ENCODE measurements at regions of chr19 and their contacts with region 1.

Region 1: DNA sequence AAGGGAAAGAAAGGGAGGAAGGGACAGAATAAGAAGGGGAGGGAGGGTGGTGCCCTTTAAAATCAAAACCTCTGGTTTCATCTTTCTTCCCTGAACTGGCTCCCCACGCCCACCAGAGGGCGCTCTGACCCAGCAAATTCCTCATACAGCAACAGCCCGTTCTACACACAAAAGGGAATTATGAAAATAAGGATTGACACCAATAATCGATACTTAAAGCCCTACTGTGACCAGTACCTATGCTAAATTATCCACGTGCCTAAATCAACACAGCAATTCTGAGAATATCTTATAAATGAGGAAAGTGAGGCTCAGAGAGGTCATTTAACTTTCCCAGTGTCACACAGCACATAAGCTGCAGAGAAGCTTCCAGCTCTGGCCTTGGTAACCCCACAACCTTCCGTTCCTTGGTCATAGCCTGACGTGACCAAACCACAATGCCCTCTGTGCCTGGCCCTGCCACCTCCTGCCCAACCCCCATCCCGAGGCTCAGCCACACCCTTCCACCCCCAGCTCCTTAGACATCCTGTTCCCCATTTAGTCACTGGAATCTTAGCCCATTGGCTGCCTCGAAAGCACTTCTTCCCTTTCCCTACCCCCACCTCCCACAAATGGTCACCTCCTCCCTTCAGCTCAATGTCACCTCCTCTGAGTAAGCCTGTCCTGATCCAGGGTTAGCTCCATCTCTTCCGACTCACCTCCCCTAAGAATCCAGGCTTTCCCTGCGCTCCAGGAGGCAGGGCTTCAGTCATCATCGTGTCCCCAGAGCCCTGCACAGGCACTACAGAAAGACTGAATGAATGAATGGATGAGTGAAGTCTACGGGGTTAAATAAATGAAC is 34.2 kb upstream of the PNMA8B start:
- DNase-seq: peak; percentile 62 to 75 (median 70)
- H3K4me3 ChIP-seq: no peak overlapping the region
- H3K4me3 Mint-ChIP-seq: peak overlapping the region in 2 of 8 donors; percentile 18 to 22
- H3K27ac ChIP-seq: no peak overlapping the region
- H3K27ac Mint-ChIP-seq: peak overlapping the region in 3 of 7 donors; percentile 29 to 66 (median 37)
- H3K4me1 ChIP-seq: peaks cover 14% of the 10 kb centered on the region
- H3K4me1 Mint-ChIP-seq: peaks cover 10 to 21% (median 13%) of the 10 kb centered on the region in 4 donors
- H3K27me3 ChIP-seq: no peaks in the 10 kb centered on the region
- H3K27me3 Mint-ChIP-seq: peaks cover 0 to 2% of the 10 kb centered on the region in 2 donors

Region 2: GRCh38 chr19:46239193-46240024 is 290.4 kb before region 1 on chr19:
- CTCF ChIA-PET with region 1: no interaction called
- POLR2A ChIA-PET with region 1: no interaction called
- intact Hi-C with region 1: no loop called
- DNase-seq: no peak
- H3K4me3 ChIP-seq: no peak overlapping the region
- H3K4me3 Mint-ChIP-seq: no peak overlapping the region
- H3K27ac ChIP-seq: no peak overlapping the region
- H3K27ac Mint-ChIP-seq: no peak overlapping the region
- H3K4me1 ChIP-seq: no peaks in the 10 kb centered on the region
- H3K4me1 Mint-ChIP-seq: no peaks in the 10 kb centered on the region
- H3K27me3 ChIP-seq: peaks cover 11% of the 10 kb centered on the region
- H3K27me3 Mint-ChIP-seq: peaks cover 31 to 44% of the 10 kb centered on the region in 2 donors

Region 3: GRCh38 chr19:46319613-46320012 is 210.2 kb before region 1 on chr19:
- CTCF ChIA-PET with region 1: no interaction called
- POLR2A ChIA-PET with region 1: no interaction called
- intact Hi-C with region 1: no loop called
- DNase-seq: no peak
- H3K4me3 ChIP-seq: no peak overlapping the region
- H3K4me3 Mint-ChIP-seq: no peak overlapping the region
- H3K27ac ChIP-seq: no peak overlapping the region
- H3K27ac Mint-ChIP-seq: peak overlapping the region in 1 of 7 donors; percentile 10
- H3K4me1 ChIP-seq: no peaks in the 10 kb centered on the region
- H3K4me1 Mint-ChIP-seq: no peaks in the 10 kb centered on the region
- H3K27me3 ChIP-seq: no peaks in the 10 kb centered on the region
- H3K27me3 Mint-ChIP-seq: no peaks in the 10 kb centered on the region

Region 4: DNA sequence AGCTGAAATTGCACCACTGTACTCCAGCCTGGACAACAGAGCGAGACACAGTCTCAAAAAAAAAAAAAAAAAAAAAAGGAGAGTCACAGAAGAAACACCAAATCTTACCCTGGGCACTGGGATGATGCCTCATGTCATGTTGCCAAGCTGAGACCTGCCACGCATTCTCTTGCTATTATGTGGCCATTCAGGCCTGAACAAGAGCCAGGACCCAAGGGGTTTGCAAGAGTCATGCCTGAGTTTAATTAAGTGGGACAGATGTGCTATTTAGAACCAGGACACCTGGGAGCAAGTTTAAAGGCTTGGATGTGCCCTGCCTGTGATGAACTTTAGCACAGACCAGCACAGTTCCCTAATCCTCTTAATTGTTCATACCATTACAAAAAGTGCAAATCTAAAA is 68.3 kb before region 1 on chr19:
- CTCF ChIA-PET with region 1: no interaction called
- POLR2A ChIA-PET with region 1: no interaction called
- intact Hi-C with region 1: no loop called
- DNase-seq: no peak
- H3K4me3 ChIP-seq: no peak overlapping the region
- H3K4me3 Mint-ChIP-seq: no peak overlapping the region
- H3K27ac ChIP-seq: no peak overlapping the region
- H3K27ac Mint-ChIP-seq: peak overlapping the region in 1 of 7 donors; percentile 7
- H3K4me1 ChIP-seq: no peaks in the 10 kb centered on the region
- H3K4me1 Mint-ChIP-seq: peaks cover 4 to 5% (median 4%) of the 10 kb centered on the region in 4 donors
- H3K27me3 ChIP-seq: peaks cover 3% of the 10 kb centered on the region
- H3K27me3 Mint-ChIP-seq: peaks cover 17 to 19% of the 10 kb centered on the region in 2 donors

Region 5: GRCh38 chr19:46513461-46514236 is 16.2 kb before region 1 on chr19:
- CTCF ChIA-PET with region 1: interaction called, 45 read pairs
- POLR2A ChIA-PET with region 1: interaction called, 3 read pairs
- intact Hi-C with region 1: no loop called
- DNase-seq: peak in 4 of 5 donors; percentile 64 to 72 (median 68)
- H3K4me3 ChIP-seq: no peak overlapping the region
- H3K4me3 Mint-ChIP-seq: no peak overlapping the region
- H3K27ac ChIP-seq: no peak overlapping the region
- H3K27ac Mint-ChIP-seq: no peak overlapping the region
- H3K4me1 ChIP-seq: peaks cover 10% of the 10 kb centered on the region
- H3K4me1 Mint-ChIP-seq: peaks cover 7 to 19% (median 10%) of the 10 kb centered on the region in 4 donors
- H3K27me3 ChIP-seq: peaks cover 3% of the 10 kb centered on the region
- H3K27me3 Mint-ChIP-seq: peaks cover 14 to 20% of the 10 kb centered on the region in 2 donors

Region 6: GRCh38 chr19:46600384-46601317 is 70.8 kb after region 1 on chr19:
- CTCF ChIA-PET with region 1: no interaction called
- POLR2A ChIA-PET with region 1: no interaction called
- intact Hi-C with region 1: loop called (anchors 2 kb)
- DNase-seq: peak; percentile 97 to 99 (median 98)
- H3K4me3 ChIP-seq: peak overlapping the region; percentile 80 to 90
- H3K4me3 Mint-ChIP-seq: peak overlapping the region; percentile 98 to 99 (median 99)
- H3K27ac ChIP-seq: peak overlapping the region; percentile 97
- H3K27ac Mint-ChIP-seq: peak overlapping the region; percentile 100
- H3K4me1 ChIP-seq: peaks cover 36% of the 10 kb centered on the region
- H3K4me1 Mint-ChIP-seq: peaks cover 10 to 46% (median 30%) of the 10 kb centered on the region in 4 donors
- H3K27me3 ChIP-seq: no peaks in the 10 kb centered on the region
- H3K27me3 Mint-ChIP-seq: peaks cover 0 to 4% of the 10 kb centered on the region in 2 donors

Region 7: GRCh38 chr19:46728693-46729676 is 199.1 kb after region 1 on chr19:
- CTCF ChIA-PET with region 1: interaction called, 3 read pairs
- POLR2A ChIA-PET with region 1: no interaction called
- intact Hi-C with region 1: loop called (anchors 1 kb)
- DNase-seq: peak; percentile 77 to 82 (median 78)
- H3K4me3 ChIP-seq: no peak overlapping the region
- H3K4me3 Mint-ChIP-seq: peak overlapping the region in 1 of 8 donors; percentile 1
- H3K27ac ChIP-seq: no peak overlapping the region
- H3K27ac Mint-ChIP-seq: peak overlapping the region in 4 of 7 donors; percentile 25 to 78 (median 56)
- H3K4me1 ChIP-seq: peaks cover 9% of the 10 kb centered on the region
- H3K4me1 Mint-ChIP-seq: peaks cover 8 to 10% (median 9%) of the 10 kb centered on the region in 4 donors
- H3K27me3 ChIP-seq: no peaks in the 10 kb centered on the region
- H3K27me3 Mint-ChIP-seq: no peaks in the 10 kb centered on the region

Region 8: DNA sequence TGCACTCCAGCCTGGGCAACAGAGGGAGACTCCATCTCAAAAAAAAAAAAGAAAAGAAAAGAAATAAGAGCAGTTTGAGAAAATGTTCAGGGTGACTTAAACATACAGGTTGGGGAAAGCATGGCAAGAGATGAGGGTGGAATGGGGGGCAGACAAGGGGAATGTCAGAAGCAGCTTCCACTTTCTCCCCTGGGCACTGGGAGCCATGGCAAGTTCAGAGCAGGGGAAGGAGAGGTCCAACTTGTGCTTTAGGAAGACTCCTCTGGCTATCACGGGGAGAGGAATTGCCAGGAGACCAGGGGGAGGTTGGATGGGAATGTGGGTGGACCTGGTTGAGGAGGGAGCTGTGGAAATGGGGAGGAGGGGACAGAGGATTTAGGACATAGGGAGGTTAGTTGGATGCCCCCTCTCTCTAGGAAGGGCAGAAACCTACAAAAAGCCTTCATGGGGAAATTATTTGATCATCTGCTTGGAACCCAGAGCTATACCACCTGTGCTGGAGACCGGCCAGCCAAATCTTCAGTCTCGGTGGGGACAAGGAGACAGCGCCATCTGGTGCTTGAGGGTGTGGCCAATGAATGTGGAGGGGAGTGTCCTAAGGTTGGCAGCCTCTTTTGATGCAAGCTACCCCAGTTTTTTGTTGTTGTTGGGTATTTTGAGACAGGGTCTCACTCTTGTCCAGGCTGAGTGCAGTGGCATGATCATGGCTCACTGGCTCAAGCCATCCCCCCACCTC is 223.7 kb after region 1 on chr19:
- CTCF ChIA-PET with region 1: interaction called, 4 read pairs
- POLR2A ChIA-PET with region 1: no interaction called
- intact Hi-C with region 1: loop called (anchors 1 kb)
- DNase-seq: peak; percentile 62 to 80 (median 68)
- H3K4me3 ChIP-seq: no peak overlapping the region
- H3K4me3 Mint-ChIP-seq: no peak overlapping the region
- H3K27ac ChIP-seq: no peak overlapping the region
- H3K27ac Mint-ChIP-seq: peak overlapping the region in 5 of 7 donors; percentile 22 to 73 (median 57)
- H3K4me1 ChIP-seq: no peaks in the 10 kb centered on the region
- H3K4me1 Mint-ChIP-seq: peaks cover 6 to 13% (median 10%) of the 10 kb centered on the region in 4 donors
- H3K27me3 ChIP-seq: no peaks in the 10 kb centered on the region
- H3K27me3 Mint-ChIP-seq: no peaks in the 10 kb centered on the region